Mammary epithelial cell (primary cell): ENCODE measurements at regions of chr12 and their contacts with region 1.

Region 1: GRCh38 chr12:49809381-49809905 is 18.8 kb downstream of the NCKAP5L start:
- DNase-seq: no peak
- H3K4me3 ChIP-seq: no peak overlapping the region
- H3K27ac ChIP-seq: no peak overlapping the region
- H3K4me1 ChIP-seq: no peaks in the 10 kb centered on the region
- H3K27me3 ChIP-seq: no peaks in the 10 kb centered on the region
- CTCF ChIP-seq: no peak

Region 2: DNA sequence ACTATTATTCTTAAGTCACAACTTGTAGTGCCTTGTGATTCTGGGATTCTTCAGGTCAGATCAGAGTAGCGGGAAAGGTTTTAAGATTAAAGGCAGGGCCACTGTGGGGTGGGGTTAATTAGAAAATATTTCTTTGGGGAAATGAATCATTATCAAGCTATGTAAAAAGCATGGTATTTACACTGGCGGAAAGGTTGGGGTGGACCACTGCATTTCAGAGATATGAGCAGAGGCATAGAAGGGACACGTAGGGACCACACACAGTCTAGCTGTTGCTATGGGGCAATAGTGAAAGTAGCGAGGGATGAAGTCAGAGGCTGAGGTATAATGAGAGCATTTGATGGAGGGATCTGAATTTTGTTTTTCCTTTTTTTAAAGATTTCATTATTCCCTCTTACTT is 302.3 kb before region 1 on chr12:
- CTCF ChIA-PET with region 1: no interaction called
- dilution Hi-C with region 1: no loop called
- in situ Hi-C with region 1: no loop called
- intact Hi-C with region 1: no loop called
- DNase-seq: peak; percentile 66
- H3K4me3 ChIP-seq: no peak overlapping the region
- H3K27ac ChIP-seq: peak overlapping the region; percentile 70
- H3K4me1 ChIP-seq: peaks cover 46% of the 10 kb centered on the region
- H3K27me3 ChIP-seq: no peaks in the 10 kb centered on the region
- CTCF ChIP-seq: no peak

Region 3: DNA sequence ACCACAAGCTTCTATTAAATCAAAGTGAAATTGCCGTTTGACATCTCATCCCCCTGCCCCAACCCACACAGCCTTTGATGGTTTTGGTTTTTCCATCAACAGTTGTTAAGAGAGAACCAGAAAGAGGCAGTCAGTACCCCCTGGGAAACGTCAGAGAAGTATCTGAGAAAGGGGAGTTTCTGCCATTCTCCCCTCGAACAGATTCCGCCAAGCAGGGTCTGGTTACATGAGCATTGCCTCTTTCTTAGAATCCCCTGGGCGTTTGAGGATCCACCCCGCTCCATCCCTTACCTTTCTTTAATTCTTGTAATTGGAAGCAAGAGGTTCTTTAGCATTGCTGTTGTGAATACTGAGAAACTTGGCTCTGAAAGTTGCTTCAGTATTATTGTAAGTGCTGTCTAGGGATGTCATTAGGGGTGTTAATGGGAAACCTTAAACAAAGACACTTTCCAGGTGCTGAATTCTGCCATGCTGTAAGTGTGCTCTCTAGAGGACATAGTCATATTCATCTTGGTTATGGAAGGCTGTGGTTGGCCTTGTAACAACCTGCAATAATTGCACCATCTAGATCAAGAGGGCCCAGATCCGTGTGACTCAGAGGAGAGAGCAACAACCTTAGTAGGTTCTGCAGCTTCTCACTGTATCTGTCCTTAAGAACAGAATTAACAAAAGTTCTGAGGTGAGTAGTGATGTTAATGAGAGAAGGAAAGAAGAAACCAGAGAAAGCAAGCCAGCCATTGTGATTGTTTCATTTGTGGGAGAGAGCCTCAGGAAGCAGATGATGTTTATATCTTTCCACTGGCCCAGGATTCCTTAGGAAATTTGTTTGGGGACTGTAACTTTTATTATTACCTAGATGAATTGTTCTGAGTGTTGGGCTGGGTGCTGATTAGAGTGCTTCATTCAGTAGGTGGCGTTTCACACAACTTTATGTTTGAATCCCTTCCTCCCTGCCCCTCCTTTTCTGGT is 59.1 kb before region 1 on chr12:
- CTCF ChIA-PET with region 1: no interaction called
- dilution Hi-C with region 1: loop called (anchors 5 kb)
- in situ Hi-C with region 1: no loop called
- intact Hi-C with region 1: no loop called
- DNase-seq: peak; percentile 90
- H3K4me3 ChIP-seq: peak overlapping the region in 1 of 3 experiments; percentile 19
- H3K27ac ChIP-seq: peak overlapping the region; percentile 54
- H3K4me1 ChIP-seq: peaks cover 21% of the 10 kb centered on the region
- H3K27me3 ChIP-seq: no peaks in the 10 kb centered on the region
- CTCF ChIP-seq: peak; percentile 14 to 40

Region 4: GRCh38 chr12:49872781-49873181 is 63.3 kb after region 1 on chr12:
- CTCF ChIA-PET with region 1: no interaction called
- dilution Hi-C with region 1: no loop called
- in situ Hi-C with region 1: no loop called
- intact Hi-C with region 1: no loop called
- DNase-seq: no peak
- H3K4me3 ChIP-seq: no peak overlapping the region
- H3K27ac ChIP-seq: no peak overlapping the region
- H3K4me1 ChIP-seq: no peaks in the 10 kb centered on the region
- H3K27me3 ChIP-seq: no peaks in the 10 kb centered on the region
- CTCF ChIP-seq: no peak

Region 5: GRCh38 chr12:49893753-49894752 is 84.6 kb after region 1 on chr12:
- CTCF ChIA-PET with region 1: no interaction called
- dilution Hi-C with region 1: loop called (anchors 5 kb)
- in situ Hi-C with region 1: no loop called
- intact Hi-C with region 1: no loop called
- DNase-seq: peak; percentile 35
- H3K4me3 ChIP-seq: no peak overlapping the region
- H3K27ac ChIP-seq: no peak overlapping the region
- H3K4me1 ChIP-seq: no peaks in the 10 kb centered on the region
- H3K27me3 ChIP-seq: no peaks in the 10 kb centered on the region
- CTCF ChIP-seq: no peak

Region 6: DNA sequence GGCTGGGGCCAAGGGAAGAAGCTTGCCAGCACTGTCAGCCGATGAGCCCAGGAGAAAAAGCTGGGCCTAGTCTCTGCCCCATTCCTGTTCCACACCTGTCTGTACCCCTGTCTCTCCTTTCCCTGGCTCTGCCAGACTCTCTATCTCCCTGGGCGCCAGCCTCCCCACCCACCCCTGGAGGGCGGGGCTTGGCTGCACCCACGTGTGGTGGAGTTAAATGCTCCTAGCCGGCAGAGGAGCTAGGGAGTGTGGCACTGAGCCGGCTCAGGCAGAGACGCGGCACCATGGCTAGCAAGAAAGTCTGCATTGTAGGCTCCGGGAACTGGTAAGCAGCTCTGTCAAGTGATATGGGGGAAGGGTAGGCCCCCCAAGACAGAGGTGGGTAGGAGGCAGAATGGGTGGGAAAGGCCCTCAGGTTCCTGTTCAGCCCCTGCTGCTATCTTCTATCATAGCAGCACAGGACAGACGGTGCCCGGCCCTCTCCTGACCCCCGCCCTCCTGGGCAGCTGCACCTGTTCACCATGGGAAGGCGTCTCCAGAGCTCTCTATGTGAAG is 294.4 kb after region 1 on chr12 and contains the start of gene GPD1:
- CTCF ChIA-PET with region 1: no interaction called
- dilution Hi-C with region 1: no loop called
- in situ Hi-C with region 1: no loop called
- intact Hi-C with region 1: no loop called
- DNase-seq: peak; percentile 62
- H3K4me3 ChIP-seq: no peak within 1 kb of the TSS
- H3K27ac ChIP-seq: no peak within 1 kb of the TSS
- H3K4me1 ChIP-seq: peaks cover 21% of the 10 kb centered on the region
- H3K27me3 ChIP-seq: no peaks in the 10 kb centered on the region
- CTCF ChIP-seq: no peak
- total RNA-seq, gene GPD1: 0.73 to 1.2 TPM

Region 7: GRCh38 chr12:50803230-50803875 is 993.9 kb after region 1 on chr12:
- CTCF ChIA-PET with region 1: interaction called, 14 read pairs
- dilution Hi-C with region 1: no loop called
- in situ Hi-C with region 1: no loop called
- intact Hi-C with region 1: no loop called
- DNase-seq: no peak
- H3K4me3 ChIP-seq: no peak overlapping the region
- H3K27ac ChIP-seq: no peak overlapping the region
- H3K4me1 ChIP-seq: no peaks in the 10 kb centered on the region
- H3K27me3 ChIP-seq: no peaks in the 10 kb centered on the region
- CTCF ChIP-seq: no peak